PC-3 (cell line): ENCODE measurements at regions of chr5 and their contacts with region 1.

Region 1: GRCh38 chr5:79235634-79236363 is at the start of gene JMY:
- DNase-seq: peak; percentile 73
- ATAC-seq: peak; percentile 75
- H3K4me3 ChIP-seq: peak within 1 kb of the TSS; percentile 81
- H3K27ac ChIP-seq: peak within 1 kb of the TSS; percentile 32
- H3K4me1 ChIP-seq: peaks cover 5% of the 10 kb centered on the region
- H3K27me3 ChIP-seq: no peaks in the 10 kb centered on the region
- CTCF ChIP-seq: no peak
- total RNA-seq, gene JMY: 4.3 and 5.7 TPM in 2 replicates

Region 2: DNA sequence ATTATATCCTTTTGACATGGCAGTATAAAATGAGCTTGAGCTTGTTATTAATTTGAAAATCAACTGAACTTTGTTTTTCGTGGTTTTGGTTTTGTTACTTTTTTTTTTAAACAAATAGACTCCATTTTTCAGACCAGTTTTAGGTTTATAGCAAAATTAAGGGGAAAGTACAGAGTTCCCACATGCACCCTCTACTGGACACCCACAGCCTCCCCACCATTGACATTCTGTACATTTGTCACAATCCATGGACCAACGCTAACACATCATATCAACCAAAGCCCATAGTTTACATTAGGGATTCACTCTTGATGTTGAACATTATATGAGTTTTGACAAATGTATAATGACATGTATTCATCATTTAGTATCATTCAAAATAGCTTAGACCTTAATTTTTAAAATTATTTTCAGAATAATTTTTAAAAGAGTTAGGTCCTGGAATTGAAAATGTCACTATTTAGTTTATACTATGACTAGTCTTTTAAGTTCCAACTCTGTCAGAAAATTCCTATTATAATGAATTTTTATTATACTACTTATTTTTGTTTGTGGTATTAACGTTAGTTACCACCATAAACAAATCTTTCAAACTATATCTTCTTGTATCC is 35.1 kb before region 1 on chr5:
- CTCF ChIA-PET with region 1: interaction called, 19 read pairs
- POLR2A ChIA-PET with region 1: no interaction called
- intact Hi-C with region 1: loop called (anchors 2 kb)
- DNase-seq: peak; percentile 52
- ATAC-seq: peak; percentile 68
- H3K4me3 ChIP-seq: no peak overlapping the region
- H3K27ac ChIP-seq: no peak overlapping the region
- H3K4me1 ChIP-seq: peaks cover 13% of the 10 kb centered on the region
- H3K27me3 ChIP-seq: no peaks in the 10 kb centered on the region
- CTCF ChIP-seq: peak; percentile 72

Region 3: GRCh38 chr5:79464695-79465332 is 229.0 kb after region 1 on chr5:
- CTCF ChIA-PET with region 1: no interaction called
- POLR2A ChIA-PET with region 1: no interaction called
- intact Hi-C with region 1: loop called (anchors 2 kb)
- DNase-seq: peak; percentile 52
- ATAC-seq: peak; percentile 55
- H3K4me3 ChIP-seq: peak overlapping the region; percentile 40; the same call in 1 of the 2 replicates
- H3K27ac ChIP-seq: no peak overlapping the region
- H3K4me1 ChIP-seq: no peaks in the 10 kb centered on the region
- H3K27me3 ChIP-seq: no peaks in the 10 kb centered on the region
- CTCF ChIP-seq: peak; percentile 80